ACHN (cell line): ENCODE measurements at regions of chr7 and their contacts with region 1.

Region 1: DNA sequence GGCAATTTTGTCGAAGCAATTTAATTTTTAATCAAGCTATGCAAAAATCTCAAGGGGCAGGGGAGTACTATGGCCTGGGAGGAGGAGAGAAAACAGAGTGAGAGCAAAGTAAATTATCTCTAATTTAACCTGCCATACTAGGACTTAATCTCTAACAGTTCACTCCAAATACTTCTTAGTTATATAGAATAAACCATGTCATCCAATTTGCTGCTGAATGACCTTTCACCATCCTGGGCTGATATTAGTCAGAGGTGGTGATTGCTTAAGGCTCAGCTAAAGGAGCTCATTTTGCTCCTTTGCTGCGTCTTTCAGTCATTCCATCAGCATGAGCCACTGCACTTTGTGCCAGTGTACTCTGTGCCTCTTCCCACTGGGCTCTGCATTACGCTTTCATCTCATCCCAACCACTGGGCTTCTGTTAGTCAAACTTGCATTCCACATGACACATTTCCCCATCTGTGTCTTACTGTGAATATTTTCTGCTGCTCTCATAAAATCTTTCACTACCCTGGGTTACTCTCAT is 84.2 kb downstream of the CD36 start:
- DNase-seq: peak; percentile 100

Region 2: GRCh38 chr7:80659120-80660055 is 63.3 kb before region 1 on chr7:
- in situ Hi-C with region 1: no loop called
- DNase-seq: peak; percentile 56

Region 3: DNA sequence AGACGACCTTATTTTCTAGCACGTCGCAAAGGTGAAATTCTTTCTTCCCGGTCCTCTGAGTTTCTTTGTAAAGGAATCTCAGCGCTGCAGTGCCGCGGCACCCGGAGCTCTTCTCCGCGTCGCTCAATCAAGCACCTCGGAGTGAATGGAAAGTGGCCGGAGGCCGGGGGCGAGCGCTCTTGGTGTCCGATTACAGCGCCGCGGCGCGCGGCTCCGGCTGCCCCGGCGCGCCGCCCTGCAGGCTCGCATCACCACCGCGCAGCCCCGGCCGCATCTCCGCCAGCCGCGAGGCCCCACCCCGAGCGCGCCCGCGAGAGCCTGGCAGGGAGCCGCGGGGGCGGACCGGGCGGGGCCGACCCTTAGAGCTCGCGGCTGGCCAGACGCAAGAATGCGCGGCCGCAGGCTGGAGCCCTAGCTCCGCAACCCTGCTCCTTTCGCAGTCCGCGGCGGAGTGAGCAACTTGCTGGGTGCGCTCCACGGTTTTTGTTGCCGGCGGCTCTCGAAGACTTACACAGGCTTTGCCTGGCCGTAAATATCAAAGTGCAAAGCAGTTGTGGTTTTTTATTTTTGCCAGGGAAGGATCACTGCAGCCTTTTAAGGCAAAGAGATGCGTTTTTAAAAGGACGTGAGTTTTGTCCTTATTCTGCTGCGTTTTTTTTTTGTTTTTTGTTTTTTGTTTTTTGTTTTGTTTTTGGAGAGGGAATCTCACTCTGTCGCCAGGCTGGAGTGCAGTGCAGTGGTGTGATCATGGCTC is 196.4 kb after region 1 on chr7 and contains the start of gene SEMA3C:
- in situ Hi-C with region 1: loop called (anchors 25 kb)
- DNase-seq: peak; percentile 99

Region 4: DNA sequence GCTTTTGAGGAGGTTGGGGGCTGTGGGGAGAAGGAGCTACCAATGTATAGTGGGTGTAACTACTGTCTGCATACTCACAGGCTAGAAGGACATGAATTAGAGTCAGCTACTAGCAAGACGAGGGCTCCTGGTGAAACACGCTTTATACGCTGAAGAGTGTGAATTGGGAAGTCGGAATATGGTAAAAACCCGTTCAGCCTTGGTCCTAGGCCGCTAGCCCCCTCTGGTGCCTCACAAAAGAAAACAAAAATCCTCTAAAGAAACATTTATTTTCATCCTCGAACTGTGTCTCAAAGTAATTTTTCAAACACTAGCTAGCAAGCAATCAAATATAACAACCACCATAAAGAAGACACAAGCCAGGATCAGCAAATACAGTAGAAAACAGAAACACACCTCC is 534.3 kb after region 1 on chr7:
- in situ Hi-C with region 1: no loop called
- DNase-seq: peak; percentile 29